Endothelial cell of umbilical vein (primary cell): ENCODE measurements at regions of chr6 and their contacts with region 1.

Region 1: DNA sequence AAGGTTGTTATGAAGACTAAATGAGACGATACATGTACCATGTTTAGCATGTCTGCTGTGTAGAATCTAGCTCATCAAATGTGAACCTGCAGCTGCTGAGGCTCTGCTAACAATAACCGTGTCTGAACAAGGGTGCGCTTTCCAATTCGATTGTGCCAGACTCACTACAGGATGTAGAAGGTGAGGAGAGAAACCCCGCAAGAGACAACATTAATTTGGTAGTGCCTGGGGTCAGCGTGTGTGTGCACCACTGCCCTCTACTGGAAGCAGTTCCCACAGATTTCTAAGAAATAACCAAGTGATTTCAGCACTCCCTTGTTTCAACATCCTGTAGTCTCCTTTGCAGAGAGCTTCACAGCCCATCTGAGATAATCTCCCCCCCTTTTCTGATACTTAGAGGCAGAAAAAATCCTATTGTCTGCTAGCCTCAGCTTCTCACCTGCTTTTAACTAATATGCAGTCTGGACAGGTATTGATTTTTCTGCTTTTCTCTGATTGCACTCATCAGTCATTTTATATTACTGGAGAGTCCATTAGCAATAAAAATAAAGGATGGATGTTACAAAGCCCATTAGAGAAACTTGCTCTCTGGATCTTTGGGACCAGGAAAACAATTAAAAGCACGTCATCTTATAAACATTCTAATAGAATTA is 96.7 kb upstream of the BACH2 start:
- DNase-seq: peak; percentile 65
- H3K4me3 ChIP-seq: no peak overlapping the region
- H3K27ac ChIP-seq: no peak overlapping the region
- H3K4me1 ChIP-seq: peaks cover 5% of the 10 kb centered on the region
- H3K27me3 ChIP-seq: peaks cover 7 to 17% of the 10 kb centered on the region in 2 experiments
- CTCF ChIP-seq: peak; percentile 67 to 69
- POLR2A ChIP-seq: no peak

Region 2: GRCh38 chr6:89970609-89971337 is 422.6 kb before region 1 on chr6:
- CTCF ChIA-PET with region 1: interaction called, 27 read pairs
- POLR2A ChIA-PET with region 1: no interaction called
- dilution Hi-C with region 1: no loop called
- intact Hi-C with region 1: loop called (anchors 1 kb)
- DNase-seq: peak; percentile 58
- H3K4me3 ChIP-seq: no peak overlapping the region
- H3K27ac ChIP-seq: no peak overlapping the region
- H3K4me1 ChIP-seq: no peaks in the 10 kb centered on the region
- H3K27me3 ChIP-seq: peaks cover 0 to 11% of the 10 kb centered on the region in 2 experiments
- CTCF ChIP-seq: peak; percentile 48 to 51
- POLR2A ChIP-seq: no peak

Region 3: GRCh38 chr6:90098001-90098531 is 295.3 kb before region 1 on chr6:
- CTCF ChIA-PET with region 1: interaction called, 10 read pairs
- POLR2A ChIA-PET with region 1: no interaction called
- dilution Hi-C with region 1: no loop called
- intact Hi-C with region 1: no loop called
- DNase-seq: peak; percentile 33
- H3K4me3 ChIP-seq: no peak overlapping the region
- H3K27ac ChIP-seq: no peak overlapping the region
- H3K4me1 ChIP-seq: no peaks in the 10 kb centered on the region
- H3K27me3 ChIP-seq: peaks cover 2 to 6% of the 10 kb centered on the region in 2 experiments
- CTCF ChIP-seq: peak in 1 of 2 donors; percentile 16
- POLR2A ChIP-seq: no peak

Region 4: GRCh38 chr6:90296346-90297114 is 96.8 kb before region 1 on chr6 and contains the start of gene BACH2:
- CTCF ChIA-PET with region 1: interaction called, 27 read pairs
- POLR2A ChIA-PET with region 1: no interaction called
- dilution Hi-C with region 1: no loop called
- intact Hi-C with region 1: no loop called
- DNase-seq: peak; percentile 78
- H3K4me3 ChIP-seq: peak within 1 kb of the TSS; percentile 34 to 83 (median 57)
- H3K27ac ChIP-seq: no peak within 1 kb of the TSS
- H3K4me1 ChIP-seq: peaks cover 6% of the 10 kb centered on the region
- H3K27me3 ChIP-seq: peaks cover 12 to 38% of the 10 kb centered on the region in 2 experiments
- CTCF ChIP-seq: peak in 1 of 2 donors; percentile 30
- POLR2A ChIP-seq: no peak
- total RNA-seq, gene BACH2: 5.6 and 5.9 TPM in 2 replicates

Region 5: GRCh38 chr6:90406142-90406794 is 12.9 kb after region 1 on chr6:
- CTCF ChIA-PET with region 1: interaction called, 16 read pairs
- POLR2A ChIA-PET with region 1: no interaction called
- dilution Hi-C with region 1: no loop called
- intact Hi-C with region 1: no loop called
- DNase-seq: no peak
- H3K4me3 ChIP-seq: no peak overlapping the region
- H3K27ac ChIP-seq: no peak overlapping the region
- H3K4me1 ChIP-seq: no peaks in the 10 kb centered on the region
- H3K27me3 ChIP-seq: peaks cover 4 to 5% of the 10 kb centered on the region in 2 experiments
- CTCF ChIP-seq: no peak
- POLR2A ChIP-seq: no peak